Spleen (tissue), 13 donors: ENCODE measurements at regions of chr12 and their contacts with region 1.

Region 1: DNA sequence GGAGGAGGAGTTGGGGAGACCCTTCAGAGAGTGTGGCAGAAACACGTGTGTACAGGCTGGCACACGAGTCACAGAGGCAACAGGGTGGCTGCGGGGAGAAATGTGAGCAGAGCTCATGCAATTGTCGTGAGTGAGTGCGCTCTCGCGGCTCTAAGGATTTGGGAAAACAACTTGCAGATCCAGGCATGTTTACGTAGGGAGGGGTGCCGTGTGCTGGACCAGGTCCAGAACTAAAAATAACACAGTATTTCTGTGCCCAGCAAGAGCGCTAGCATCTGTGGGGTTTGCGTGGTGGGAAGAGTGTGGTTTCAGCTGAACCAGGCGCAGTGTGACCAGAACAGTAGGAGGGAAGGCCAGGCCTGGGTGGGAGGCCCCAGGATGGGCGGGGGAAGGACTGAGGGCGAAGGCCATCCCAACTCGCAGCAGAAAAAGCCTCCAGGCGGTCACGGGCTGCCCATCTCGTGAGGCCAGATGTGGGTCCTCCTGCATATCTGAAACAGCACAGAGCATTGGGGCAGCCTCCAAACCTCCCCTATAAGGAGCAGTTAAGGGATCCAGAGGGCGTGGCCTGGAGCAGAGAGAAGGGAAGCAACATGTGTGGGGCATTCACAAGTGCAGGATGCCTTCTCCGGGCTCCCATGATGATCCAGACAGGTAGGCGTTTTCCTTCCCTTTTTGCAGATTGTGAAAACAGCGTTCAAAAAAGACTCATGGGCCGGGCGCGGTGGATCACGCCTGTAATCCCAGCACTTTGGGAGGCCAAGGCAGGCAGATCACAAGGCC is 17.9 kb upstream of the CD9 start:
- DNase-seq: peak; percentile 85
- H3K4me3 ChIP-seq: peak overlapping the region in 2 of 8 donors; percentile 23 to 55
- H3K27ac ChIP-seq: peak overlapping the region in 7 of 8 donors; percentile 33 to 84 (median 71)
- H3K4me1 ChIP-seq: peaks cover 14 to 52% (median 38%) of the 10 kb centered on the region in 6 donors
- H3K27me3 ChIP-seq: peaks cover 0 to 10% (median 0%) of the 10 kb centered on the region in 7 donors
- CTCF ChIP-seq: no peak
- POLR2A ChIP-seq: no peak

Region 2: DNA sequence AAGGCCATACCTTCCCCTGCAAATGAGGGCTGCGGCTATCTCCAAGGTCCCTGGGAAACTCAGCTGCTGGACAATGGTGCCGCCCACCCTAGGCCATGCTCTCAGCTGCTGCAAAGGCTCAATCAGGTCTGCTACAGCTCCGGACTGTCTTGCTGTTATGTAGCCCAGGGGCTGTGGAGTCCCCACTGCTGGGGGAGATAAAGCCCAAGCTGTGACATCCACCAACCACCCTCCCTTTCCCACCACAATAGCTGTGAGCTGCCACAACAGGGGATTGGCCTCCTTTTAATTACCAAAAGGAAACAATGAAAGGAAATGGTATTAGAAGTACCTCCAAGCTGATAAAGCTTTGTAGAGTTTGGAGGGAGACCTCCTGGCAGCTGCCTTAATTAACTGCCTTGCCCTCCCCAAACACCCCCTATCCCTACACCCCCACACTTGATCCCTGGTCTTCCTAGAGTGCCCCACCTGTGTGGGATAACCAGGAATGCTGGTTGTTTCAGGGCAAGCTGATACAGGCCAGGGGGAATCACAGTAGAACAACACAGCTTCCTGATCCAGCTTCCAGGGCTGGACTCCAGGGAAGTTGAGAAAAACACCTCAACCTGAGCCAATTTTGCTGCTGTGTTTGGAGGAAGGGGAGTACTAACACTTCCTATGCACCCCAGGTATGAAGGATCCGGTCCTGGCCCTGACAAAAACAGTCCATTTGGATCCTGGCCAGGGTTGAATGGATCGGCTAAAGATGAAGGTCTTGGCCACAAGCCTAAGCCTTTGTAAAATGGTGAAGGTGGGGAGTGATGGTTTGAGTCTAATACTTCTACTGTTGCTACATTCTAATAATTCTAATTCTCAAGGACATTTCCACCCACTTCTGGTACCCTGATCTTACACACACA is 57.6 kb before region 1 on chr12 and contains the start of gene VWF:
- intact Hi-C with region 1: loop called (anchors 5 kb)
- DNase-seq: no peak
- H3K4me3 ChIP-seq: peak within 1 kb of the TSS in 7 of 8 donors; percentile 15 to 64 (median 33)
- H3K27ac ChIP-seq: peak within 1 kb of the TSS; percentile 15 to 83 (median 74)
- H3K4me1 ChIP-seq: peaks cover 0 to 8% (median 4%) of the 10 kb centered on the region in 6 donors
- H3K27me3 ChIP-seq: no peaks in the 10 kb centered on the region
- CTCF ChIP-seq: no peak
- POLR2A ChIP-seq: no peak
- total RNA-seq, gene VWF: 272 to 957 (median 395) TPM